Naive thymus-derived CD4-positive, alpha-beta T cell (primary cell): ENCODE measurements at regions of chr22 and their contacts with region 1.

Region 1: GRCh38 chr22:36481393-36482168 is at the start of gene TXN2:
- DNase-seq: peak; percentile 91 to 99 (median 98)
- ATAC-seq: peak; percentile 90
- H3K4me3 ChIP-seq: peak within 1 kb of the TSS; percentile 55
- H3K4me3 Mint-ChIP-seq: peak within 1 kb of the TSS; percentile 90 to 100 (median 96)
- H3K27ac ChIP-seq: peak within 1 kb of the TSS; percentile 96
- H3K27ac Mint-ChIP-seq: peak within 1 kb of the TSS; percentile 78 to 99 (median 95)
- H3K4me1 ChIP-seq: peaks cover 8 to 15% of the 10 kb centered on the region in 2 donors
- H3K4me1 Mint-ChIP-seq: peaks cover 15 to 30% (median 18%) of the 10 kb centered on the region in 7 donors
- H3K27me3 ChIP-seq: no peaks in the 10 kb centered on the region
- H3K27me3 Mint-ChIP-seq: peaks cover 0 to 2% (median 0%) of the 10 kb centered on the region in 5 donors
- total RNA-seq, gene TXN2: 35.5 to 69.9 (median 37.7) TPM

Region 2: GRCh38 chr22:36156515-36157419 is 324.8 kb before region 1 on chr22:
- CTCF ChIA-PET with region 1: no interaction called
- POLR2A ChIA-PET with region 1: no interaction called
- intact Hi-C with region 1: loop called (anchors 10 kb)
- DNase-seq: peak; percentile 43 to 77 (median 59)
- ATAC-seq: peak; percentile 84
- H3K4me3 ChIP-seq: peak overlapping the region; percentile 59
- H3K4me3 Mint-ChIP-seq: peak overlapping the region; percentile 89 to 98 (median 97)
- H3K27ac ChIP-seq: peak overlapping the region; percentile 96
- H3K27ac Mint-ChIP-seq: peak overlapping the region; percentile 94 to 99 (median 98)
- H3K4me1 ChIP-seq: peaks cover 63 to 73% of the 10 kb centered on the region in 2 donors
- H3K4me1 Mint-ChIP-seq: peaks cover 75 to 99% (median 86%) of the 10 kb centered on the region in 7 donors
- H3K27me3 ChIP-seq: no peaks in the 10 kb centered on the region
- H3K27me3 Mint-ChIP-seq: no peaks in the 10 kb centered on the region

Region 3: GRCh38 chr22:36301384-36301828 is 180.2 kb before region 1 on chr22:
- CTCF ChIA-PET with region 1: interaction called, 18 read pairs
- POLR2A ChIA-PET with region 1: interaction called, 7 read pairs
- intact Hi-C with region 1: loop called in 1 of 2 experiments (anchors 1 kb)
- DNase-seq: peak; percentile 68 to 86 (median 80)
- ATAC-seq: peak; percentile 94
- H3K4me3 ChIP-seq: no peak overlapping the region
- H3K4me3 Mint-ChIP-seq: peak overlapping the region in 3 of 10 donors; percentile 6 to 40 (median 26)
- H3K27ac ChIP-seq: peak overlapping the region; percentile 15
- H3K27ac Mint-ChIP-seq: peak overlapping the region; percentile 56 to 81 (median 76)
- H3K4me1 ChIP-seq: peaks cover 0 to 3% of the 10 kb centered on the region in 2 donors
- H3K4me1 Mint-ChIP-seq: peaks cover 4 to 14% (median 11%) of the 10 kb centered on the region in 7 donors
- H3K27me3 ChIP-seq: no peaks in the 10 kb centered on the region
- H3K27me3 Mint-ChIP-seq: no peaks in the 10 kb centered on the region

Region 4: DNA sequence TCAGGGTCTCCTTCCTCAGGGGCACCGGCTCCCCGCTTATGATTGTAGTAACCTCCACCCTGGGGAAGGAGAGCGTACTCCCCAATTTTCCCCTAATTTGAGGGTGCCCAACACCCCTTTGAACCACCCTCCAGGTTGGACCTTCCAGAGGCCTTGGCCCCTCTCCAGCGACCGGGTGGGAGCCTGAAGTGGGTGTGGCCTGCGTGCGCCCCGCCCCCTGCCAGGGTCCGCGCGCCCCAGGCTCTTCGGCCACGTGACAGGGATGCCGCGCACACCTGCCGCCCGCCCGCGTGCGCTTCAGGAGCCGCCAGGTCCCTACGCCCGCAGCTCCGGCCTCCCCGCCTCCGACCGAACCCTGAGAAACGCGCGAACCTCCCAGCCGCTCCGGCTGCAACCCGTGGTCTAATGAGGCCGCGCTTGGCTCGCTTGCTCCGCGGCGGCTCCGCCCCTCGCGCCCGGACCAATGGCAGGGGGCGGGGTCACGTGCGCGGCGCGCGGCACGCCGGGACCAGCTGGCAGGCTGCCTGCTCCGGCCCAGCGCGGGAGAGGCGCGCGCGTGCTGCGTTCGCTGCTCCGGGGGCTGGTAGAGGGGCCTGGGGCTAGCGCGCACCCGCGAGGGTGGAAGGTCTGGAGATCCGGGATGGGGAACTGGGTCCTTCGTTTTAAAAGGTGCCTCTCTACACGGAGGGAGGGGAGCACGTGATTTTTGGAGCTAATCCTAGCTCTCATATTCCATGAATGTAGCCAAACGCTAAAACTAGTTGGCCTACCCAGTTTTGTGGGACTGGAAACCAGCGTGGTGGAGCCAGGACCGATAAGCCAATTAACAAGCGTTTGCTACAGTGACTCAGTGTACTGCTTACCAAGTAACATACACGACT is 25.3 kb after region 1 on chr22 and contains the start of gene FOXRED2:
- CTCF ChIA-PET with region 1: no interaction called
- POLR2A ChIA-PET with region 1: interaction called, 15 read pairs
- intact Hi-C with region 1: loop called (anchors 1 kb)
- DNase-seq: peak; percentile 85 to 95 (median 91)
- ATAC-seq: peak; percentile 98
- H3K4me3 ChIP-seq: peak within 1 kb of the TSS; percentile 67
- H3K4me3 Mint-ChIP-seq: peak within 1 kb of the TSS; percentile 39 to 84 (median 71)
- H3K27ac ChIP-seq: peak within 1 kb of the TSS; percentile 72
- H3K27ac Mint-ChIP-seq: peak within 1 kb of the TSS; percentile 26 to 84 (median 62)
- H3K4me1 ChIP-seq: peaks cover 5 to 11% of the 10 kb centered on the region in 2 donors
- H3K4me1 Mint-ChIP-seq: peaks cover 8 to 23% (median 14%) of the 10 kb centered on the region in 7 donors
- H3K27me3 ChIP-seq: no peaks in the 10 kb centered on the region
- H3K27me3 Mint-ChIP-seq: no peaks in the 10 kb centered on the region
- total RNA-seq, gene FOXRED2: 2.3 to 13.1 (median 11.4) TPM

Region 5: GRCh38 chr22:36554098-36554497 is 72.5 kb after region 1 on chr22:
- CTCF ChIA-PET with region 1: no interaction called
- POLR2A ChIA-PET with region 1: no interaction called
- intact Hi-C with region 1: no loop called
- DNase-seq: no peak
- ATAC-seq: no peak
- H3K4me3 ChIP-seq: no peak overlapping the region
- H3K4me3 Mint-ChIP-seq: no peak overlapping the region
- H3K27ac ChIP-seq: no peak overlapping the region
- H3K27ac Mint-ChIP-seq: no peak overlapping the region
- H3K4me1 ChIP-seq: no peaks in the 10 kb centered on the region
- H3K4me1 Mint-ChIP-seq: peaks cover 0 to 6% (median 0%) of the 10 kb centered on the region in 7 donors
- H3K27me3 ChIP-seq: no peaks in the 10 kb centered on the region
- H3K27me3 Mint-ChIP-seq: peaks cover 7 to 31% (median 18%) of the 10 kb centered on the region in 5 donors

Region 6: GRCh38 chr22:36569999-36570398 is 88.4 kb after region 1 on chr22:
- CTCF ChIA-PET with region 1: no interaction called
- POLR2A ChIA-PET with region 1: no interaction called
- intact Hi-C with region 1: no loop called
- DNase-seq: no peak
- ATAC-seq: no peak
- H3K4me3 ChIP-seq: no peak overlapping the region
- H3K4me3 Mint-ChIP-seq: no peak overlapping the region
- H3K27ac ChIP-seq: no peak overlapping the region
- H3K27ac Mint-ChIP-seq: no peak overlapping the region
- H3K4me1 ChIP-seq: no peaks in the 10 kb centered on the region
- H3K4me1 Mint-ChIP-seq: peaks cover 0 to 2% (median 0%) of the 10 kb centered on the region in 7 donors
- H3K27me3 ChIP-seq: no peaks in the 10 kb centered on the region
- H3K27me3 Mint-ChIP-seq: peaks cover 5 to 30% (median 12%) of the 10 kb centered on the region in 5 donors

Region 7: GRCh38 chr22:36595940-36596339 is 114.4 kb after region 1 on chr22:
- CTCF ChIA-PET with region 1: no interaction called
- POLR2A ChIA-PET with region 1: no interaction called
- intact Hi-C with region 1: no loop called
- DNase-seq: no peak
- ATAC-seq: no peak
- H3K4me3 ChIP-seq: no peak overlapping the region
- H3K4me3 Mint-ChIP-seq: no peak overlapping the region
- H3K27ac ChIP-seq: no peak overlapping the region
- H3K27ac Mint-ChIP-seq: no peak overlapping the region
- H3K4me1 ChIP-seq: no peaks in the 10 kb centered on the region
- H3K4me1 Mint-ChIP-seq: no peaks in the 10 kb centered on the region
- H3K27me3 ChIP-seq: no peaks in the 10 kb centered on the region
- H3K27me3 Mint-ChIP-seq: peaks cover 12 to 48% (median 22%) of the 10 kb centered on the region in 5 donors